ENCODE measurements at regions of chr4 and their contacts with region 1.

Region 1: GRCh38 chr4:183600189-183600685 is 58.7 kb downstream of the RWDD4 start:
- DNase-seq: peak; percentile 36
- ATAC-seq: peak; percentile 82
- H3K4me3 Mint-ChIP-seq: no peak overlapping the region
- H3K27ac Mint-ChIP-seq: no peak overlapping the region
- H3K4me1 Mint-ChIP-seq: no peaks in the 10 kb centered on the region
- H3K27me3 Mint-ChIP-seq: no peaks in the 10 kb centered on the region
- CTCF ChIP-seq: no peak

Region 2: DNA sequence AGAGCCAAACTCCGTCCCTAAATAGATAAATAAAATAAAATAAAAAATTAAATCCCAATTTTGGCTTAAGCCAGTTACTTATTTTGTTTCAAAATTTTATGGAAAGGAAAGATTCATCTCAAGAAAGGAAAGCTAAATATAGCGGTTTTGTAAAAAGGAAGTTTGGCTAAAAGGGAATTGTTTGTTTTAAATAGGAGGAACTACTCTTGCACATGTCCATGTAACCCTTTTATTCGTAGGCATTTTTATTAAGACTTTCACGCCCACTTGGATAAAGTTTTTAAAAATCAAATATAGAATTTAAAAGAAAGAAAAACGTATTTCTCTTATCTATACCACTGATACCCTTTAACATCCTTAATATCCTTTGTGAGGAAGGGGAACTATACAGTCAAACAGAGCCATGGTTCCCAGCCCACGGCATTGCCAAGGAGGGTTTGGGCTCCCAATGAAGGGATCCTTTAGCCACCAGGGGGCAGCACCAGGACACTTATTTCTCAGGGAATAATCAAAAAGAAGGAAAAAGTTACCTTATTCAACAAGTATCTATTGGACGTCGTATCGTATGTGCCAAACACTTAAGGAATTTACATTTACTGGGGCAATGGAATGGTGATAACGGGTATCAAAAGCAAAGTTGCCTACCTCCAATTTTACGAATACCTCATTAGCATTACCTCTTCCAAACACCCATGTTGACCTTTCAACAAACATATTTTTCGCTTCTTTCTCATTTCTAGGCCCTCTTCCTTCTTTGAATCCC is 128.1 kb before region 1 on chr4:
- CTCF ChIA-PET with region 1: interaction called, 11 read pairs
- POLR2A ChIA-PET with region 1: no interaction called
- DNase-seq: peak; percentile 90
- ATAC-seq: peak; percentile 88
- H3K4me3 Mint-ChIP-seq: no peak overlapping the region
- H3K27ac Mint-ChIP-seq: no peak overlapping the region
- H3K4me1 Mint-ChIP-seq: peaks cover 12% of the 10 kb centered on the region
- H3K27me3 Mint-ChIP-seq: no peaks in the 10 kb centered on the region
- CTCF ChIP-seq: peak; percentile 77